ENCODE measurements at regions of chr6 and their contacts with region 1.

Region 1: GRCh38 chr6:24581084-24581669 is 64.8 kb downstream of the KIAA0319 start:
- H3K4me3 ChIP-seq: no peak overlapping the region
- H3K27ac ChIP-seq: no peak overlapping the region
- H3K4me1 ChIP-seq: peaks cover 12% of the 10 kb centered on the region
- CTCF ChIP-seq: peak; percentile 81

Region 2: DNA sequence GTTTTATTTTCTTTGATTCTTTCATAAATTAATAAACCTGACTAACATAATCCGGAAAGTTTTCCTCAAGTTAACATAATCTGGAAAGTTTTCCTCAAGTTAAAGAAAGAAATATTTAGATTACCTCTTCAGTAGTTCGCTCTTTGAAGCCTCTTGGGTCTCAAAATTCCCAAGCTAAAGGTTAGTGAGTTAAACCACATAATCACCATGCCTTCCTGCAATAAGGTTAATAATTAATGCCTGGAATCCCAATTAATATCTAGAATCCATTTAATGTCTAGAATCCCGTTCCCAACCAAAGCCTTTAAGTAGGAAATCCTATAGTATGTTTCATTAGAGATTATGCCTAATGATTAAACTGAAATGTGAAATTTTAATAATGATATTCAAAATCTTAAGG is 236.2 kb before region 1 on chr6:
- CTCF ChIA-PET with region 1: no interaction called
- POLR2A ChIA-PET with region 1: no interaction called
- H3K4me3 ChIP-seq: no peak overlapping the region
- H3K27ac ChIP-seq: no peak overlapping the region
- H3K4me1 ChIP-seq: no peaks in the 10 kb centered on the region
- CTCF ChIP-seq: no peak

Region 3: GRCh38 chr6:24431045-24431451 is 150.1 kb before region 1 on chr6:
- CTCF ChIA-PET with region 1: interaction called, 21 read pairs
- POLR2A ChIA-PET with region 1: no interaction called
- H3K4me3 ChIP-seq: no peak overlapping the region
- H3K27ac ChIP-seq: no peak overlapping the region
- H3K4me1 ChIP-seq: no peaks in the 10 kb centered on the region
- CTCF ChIP-seq: no peak

Region 4: DNA sequence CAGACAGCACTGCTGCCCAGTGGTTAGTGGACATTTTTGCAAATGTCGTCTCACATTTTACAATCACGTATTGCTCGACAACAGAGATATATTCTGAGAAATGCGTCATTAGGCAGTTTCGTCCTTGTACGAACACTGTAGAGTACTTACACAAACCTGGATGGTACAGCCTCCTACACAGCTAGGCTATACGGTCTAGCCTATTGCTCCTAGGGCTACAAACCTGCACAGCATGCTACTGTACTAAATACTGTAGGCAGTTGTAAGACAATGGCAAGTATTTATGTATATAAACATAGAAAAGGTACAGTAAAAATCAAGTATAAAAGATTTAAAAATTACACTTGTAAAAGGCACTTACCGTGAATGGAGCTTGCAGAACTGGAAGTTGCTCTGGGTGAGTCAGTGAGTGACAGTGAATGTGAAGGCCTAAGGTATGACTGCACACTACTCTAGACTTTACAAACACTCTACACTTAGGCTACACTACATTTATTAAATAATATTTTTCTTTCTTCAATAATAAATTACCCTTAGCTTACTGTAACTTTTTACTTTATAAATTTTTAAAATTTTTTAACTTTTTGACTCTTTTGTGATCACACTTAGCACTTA is 43.3 kb before region 1 on chr6:
- CTCF ChIA-PET with region 1: interaction called, 23 read pairs
- POLR2A ChIA-PET with region 1: no interaction called
- H3K4me3 ChIP-seq: no peak overlapping the region
- H3K27ac ChIP-seq: no peak overlapping the region
- H3K4me1 ChIP-seq: peaks cover 10% of the 10 kb centered on the region; the same call in 1 of the 2 replicates
- CTCF ChIP-seq: no peak

Region 5: GRCh38 chr6:24614043-24614420 is 32.9 kb after region 1 on chr6:
- CTCF ChIA-PET with region 1: interaction called, 14 read pairs
- POLR2A ChIA-PET with region 1: no interaction called
- H3K4me3 ChIP-seq: no peak overlapping the region
- H3K27ac ChIP-seq: no peak overlapping the region
- H3K4me1 ChIP-seq: no peaks in the 10 kb centered on the region
- CTCF ChIP-seq: no peak

Region 6: DNA sequence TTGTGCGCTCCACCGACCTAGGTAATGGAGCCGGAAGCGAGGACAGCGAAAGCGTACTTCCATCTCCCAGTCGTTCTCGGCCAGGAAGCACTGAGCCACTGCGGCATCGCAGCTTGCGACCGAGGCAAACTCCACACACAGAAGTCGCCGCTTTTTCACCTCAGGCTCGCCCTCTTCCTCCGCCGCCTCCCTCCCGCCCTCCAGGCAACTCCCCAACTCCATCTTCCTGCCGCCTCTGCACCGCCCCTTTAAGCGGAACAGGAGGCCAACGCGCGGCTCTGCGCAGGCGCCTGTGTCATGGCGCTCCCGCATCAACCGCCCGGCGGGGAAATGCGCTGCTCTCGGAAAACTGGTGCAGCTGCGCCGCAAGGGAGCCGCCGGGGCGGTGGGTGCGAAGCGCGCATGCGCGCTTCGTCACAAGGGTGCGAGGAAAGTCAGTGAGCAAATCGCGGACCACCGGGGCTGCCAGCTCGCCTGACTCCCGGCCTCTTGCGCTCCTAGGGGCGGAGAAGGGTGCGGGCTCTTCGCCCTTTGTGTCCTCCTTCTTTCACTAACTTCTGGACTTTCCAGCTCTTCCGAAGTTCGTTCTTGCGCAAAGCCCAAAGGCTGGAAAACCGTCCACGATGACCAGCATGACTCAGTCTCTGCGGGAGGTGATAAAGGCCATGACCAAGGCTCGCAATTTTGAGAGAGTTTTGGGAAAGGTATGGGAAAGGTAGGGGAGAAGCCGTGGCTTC is 85.6 kb after region 1 on chr6 and contains the starts of genes ACOT13 and TDP2:
- CTCF ChIA-PET with region 1: interaction called, 31 read pairs
- POLR2A ChIA-PET with region 1: interaction called, 28 read pairs
- H3K4me3 ChIP-seq: peak within 1 kb of the TSS; percentile 93
- H3K27ac ChIP-seq: peak within 1 kb of the TSS; percentile 71
- H3K4me1 ChIP-seq: no peaks in the 10 kb centered on the region; the same call in 1 of the 2 replicates
- CTCF ChIP-seq: peak; percentile 69

Region 7: DNA sequence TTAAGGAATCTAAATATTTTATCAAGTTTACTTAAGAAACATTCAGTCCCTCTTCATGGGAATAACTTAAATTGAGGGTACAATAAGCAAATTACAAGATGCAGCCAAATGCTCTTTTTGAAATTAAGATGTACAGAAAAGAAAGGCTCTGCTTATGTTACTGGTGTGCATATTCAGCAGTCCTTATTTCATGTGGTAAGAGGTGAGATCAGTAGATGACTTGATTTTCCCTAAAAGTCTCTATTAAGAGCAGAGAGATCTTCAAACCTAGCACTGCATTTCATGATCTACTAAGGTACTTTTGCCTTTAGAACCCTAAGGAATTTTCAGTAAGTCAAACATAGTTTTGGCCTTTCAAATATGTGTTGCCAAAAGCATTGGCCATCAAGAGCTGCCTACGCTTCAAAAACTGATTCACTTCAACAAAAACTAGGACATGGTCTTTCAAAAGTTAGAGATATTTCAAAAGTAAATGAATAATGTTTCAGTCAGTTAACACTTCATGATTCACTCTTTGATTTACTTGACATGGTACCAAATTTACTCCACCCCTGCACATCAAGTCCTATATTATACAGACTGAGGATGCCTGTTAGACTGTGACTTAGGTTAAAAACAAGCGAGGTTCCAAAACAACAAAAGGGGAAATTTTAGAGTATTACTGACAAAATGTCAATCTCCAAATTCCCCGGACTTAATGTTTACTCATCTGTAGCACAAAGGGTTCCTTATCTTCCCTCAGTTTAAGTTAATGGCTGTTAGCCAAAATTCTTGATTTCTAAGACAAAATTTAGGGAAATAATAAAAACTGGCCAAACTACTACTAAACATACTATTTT is 118.6 kb after region 1 on chr6:
- CTCF ChIA-PET with region 1: interaction called, 20 read pairs
- POLR2A ChIA-PET with region 1: interaction called, 3 read pairs
- H3K4me3 ChIP-seq: no peak overlapping the region
- H3K27ac ChIP-seq: no peak overlapping the region
- H3K4me1 ChIP-seq: no peaks in the 10 kb centered on the region; the same call in 1 of the 2 replicates
- CTCF ChIP-seq: no peak

Region 8: GRCh38 chr6:24774696-24775519 is 193.7 kb after region 1 on chr6 and contains the start of gene GMNN:
- CTCF ChIA-PET with region 1: interaction called, 4 read pairs
- POLR2A ChIA-PET with region 1: interaction called, 13 read pairs
- H3K4me3 ChIP-seq: peak within 1 kb of the TSS; percentile 81
- H3K27ac ChIP-seq: peak within 1 kb of the TSS; percentile 97
- H3K4me1 ChIP-seq: peaks cover 10% of the 10 kb centered on the region
- CTCF ChIP-seq: no peak